Posterior cingulate gyrus (tissue), 11 donors: ENCODE measurements at regions of chrX and their contacts with region 1.

Region 1: DNA sequence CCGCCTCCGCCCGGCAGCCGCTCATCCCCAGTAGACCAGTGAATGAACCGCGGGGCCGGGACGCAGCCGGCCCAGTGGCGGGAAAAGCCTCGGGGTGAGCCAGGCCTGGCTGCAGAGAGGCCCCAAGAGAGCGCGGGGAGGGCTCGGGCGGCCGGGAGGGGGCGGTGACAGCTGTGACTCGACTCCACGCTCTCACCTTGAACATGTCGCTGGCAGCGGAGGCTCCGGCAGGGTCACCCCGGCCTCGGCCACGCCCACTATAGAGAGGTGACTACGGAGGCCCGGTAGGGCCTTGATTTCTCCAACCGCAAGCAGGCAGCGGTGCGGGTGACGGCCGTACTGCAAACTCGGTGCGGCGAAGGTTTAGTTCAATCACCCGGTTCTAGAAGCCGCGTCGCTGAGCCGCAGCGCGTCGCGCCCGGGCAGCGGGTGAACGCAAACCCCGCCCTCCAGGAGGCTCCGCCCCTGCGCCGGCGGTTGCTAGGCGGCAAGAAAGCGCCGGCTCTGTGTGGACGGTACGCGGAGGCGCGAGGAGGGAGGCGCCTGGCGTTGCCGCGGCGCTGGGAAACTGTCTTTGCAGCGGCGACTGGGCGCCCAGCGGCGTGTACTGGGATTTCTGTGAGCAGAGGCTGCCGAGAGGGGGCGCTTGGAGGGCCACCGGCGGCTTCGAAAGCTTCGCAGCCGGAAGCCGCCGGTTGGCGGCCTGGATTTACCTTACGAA is at the starts of genes APOO and CXorf58:
- DNase-seq: peak; percentile 72 to 99 (median 86)

Region 2: GRCh38 chrX:24024819-24025740 is 117.4 kb after region 1 on chrX:
- intact Hi-C with region 1: loop called (anchors 2 kb)
- DNase-seq: peak; percentile 58 to 96 (median 74)